Calu3 (cell line): ENCODE measurements at regions of chr12 and their contacts with region 1.

Region 1: GRCh38 chr12:78120866-78121560 is 290.3 kb downstream of the NAV3 start:
- DNase-seq: peak; percentile 15
- H3K4me3 Mint-ChIP-seq: no peak overlapping the region
- H3K27ac Mint-ChIP-seq: no peak overlapping the region
- H3K4me1 Mint-ChIP-seq: peaks cover 10% of the 10 kb centered on the region
- H3K27me3 Mint-ChIP-seq: no peaks in the 10 kb centered on the region
- CTCF ChIP-seq: no peak

Region 2: DNA sequence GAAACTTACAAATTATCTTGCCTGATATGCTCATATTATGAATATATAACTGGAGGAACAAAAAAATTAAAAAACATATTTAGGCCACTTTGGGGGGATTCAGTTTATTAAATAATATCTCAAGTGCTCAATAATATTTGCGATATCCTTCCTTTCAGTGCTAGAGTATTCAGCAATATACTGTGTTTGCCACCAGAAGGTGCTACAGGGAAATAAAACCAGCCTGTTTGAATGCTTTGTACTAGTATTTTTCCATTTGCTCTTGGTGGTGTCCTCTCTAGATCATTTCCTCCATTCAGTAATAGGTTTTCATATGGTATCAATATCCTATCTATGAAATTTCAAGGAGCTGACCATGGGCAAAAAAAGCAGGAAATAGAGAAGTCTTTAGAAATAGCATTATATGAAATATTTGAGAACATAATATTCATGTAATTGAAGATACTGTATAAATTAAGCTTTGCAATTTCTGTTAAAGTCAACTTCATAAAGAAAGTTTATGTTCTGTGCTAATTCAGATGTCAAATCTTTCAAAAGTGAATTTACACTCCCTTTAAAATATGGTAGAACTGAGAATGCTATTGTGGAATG is 396.6 kb before region 1 on chr12:
- CTCF ChIA-PET with region 1: no interaction called
- intact Hi-C with region 1: loop called (anchors 2 kb)
- DNase-seq: peak; percentile 30
- H3K4me3 Mint-ChIP-seq: no peak overlapping the region
- H3K27ac Mint-ChIP-seq: no peak overlapping the region
- H3K4me1 Mint-ChIP-seq: no peaks in the 10 kb centered on the region
- H3K27me3 Mint-ChIP-seq: no peaks in the 10 kb centered on the region
- CTCF ChIP-seq: peak; percentile 71

Region 3: GRCh38 chr12:77995436-77996167 is 125.4 kb before region 1 on chr12:
- CTCF ChIA-PET with region 1: no interaction called
- intact Hi-C with region 1: loop called (anchors 1 kb)
- DNase-seq: no peak
- H3K4me3 Mint-ChIP-seq: no peak overlapping the region
- H3K27ac Mint-ChIP-seq: no peak overlapping the region
- H3K4me1 Mint-ChIP-seq: peaks cover 6% of the 10 kb centered on the region
- H3K27me3 Mint-ChIP-seq: no peaks in the 10 kb centered on the region
- CTCF ChIP-seq: no peak

Region 4: GRCh38 chr12:78035901-78036606 is 85.0 kb before region 1 on chr12:
- CTCF ChIA-PET with region 1: no interaction called
- intact Hi-C with region 1: no loop called
- DNase-seq: no peak
- H3K4me3 Mint-ChIP-seq: peak overlapping the region; percentile 40
- H3K27ac Mint-ChIP-seq: no peak overlapping the region
- H3K4me1 Mint-ChIP-seq: peaks cover 8% of the 10 kb centered on the region
- H3K27me3 Mint-ChIP-seq: no peaks in the 10 kb centered on the region
- CTCF ChIP-seq: no peak